Sigmoid colon (tissue), 7 donors: ENCODE measurements at regions of chr1 and their contacts with region 1.

Region 1: DNA sequence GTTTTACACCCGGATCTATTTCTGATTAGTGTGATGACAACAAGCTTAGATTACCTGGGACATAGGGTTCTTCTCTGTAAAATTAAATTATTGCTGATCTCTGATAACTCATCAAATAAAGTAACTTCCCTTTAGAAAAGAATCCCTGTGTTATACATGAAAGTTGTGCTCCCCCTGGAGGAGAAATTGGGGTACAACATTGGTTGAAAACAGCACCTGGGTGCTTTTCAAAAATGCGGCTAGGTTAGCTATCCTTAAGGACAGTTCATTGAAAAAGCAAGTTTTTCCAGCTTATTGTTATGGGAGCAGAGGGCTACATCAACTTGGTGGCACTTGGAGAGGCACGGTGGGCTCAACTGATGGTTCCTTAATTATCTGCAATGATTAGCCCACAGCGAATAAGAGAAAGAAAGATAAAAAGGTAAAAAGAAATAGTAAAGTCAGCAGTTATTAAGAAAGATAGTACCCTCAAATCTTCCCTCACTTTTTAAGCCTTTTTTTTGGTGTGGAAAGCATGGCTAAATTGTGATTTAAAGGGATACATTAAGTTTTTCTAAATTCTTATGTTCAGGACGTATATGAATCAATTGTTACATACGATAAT is 97.8 kb downstream of the FMN2 start:
- DNase-seq: no peak
- H3K4me3 ChIP-seq: no peak overlapping the region
- H3K27ac ChIP-seq: no peak overlapping the region
- H3K4me1 ChIP-seq: peaks cover 0 to 26% (median 14%) of the 10 kb centered on the region in 4 donors
- H3K27me3 ChIP-seq: no peaks in the 10 kb centered on the region
- CTCF ChIP-seq: peak; percentile 34 to 77 (median 68)
- EP300 ChIP-seq: no peak
- POLR2A ChIP-seq: no peak

Region 2: DNA sequence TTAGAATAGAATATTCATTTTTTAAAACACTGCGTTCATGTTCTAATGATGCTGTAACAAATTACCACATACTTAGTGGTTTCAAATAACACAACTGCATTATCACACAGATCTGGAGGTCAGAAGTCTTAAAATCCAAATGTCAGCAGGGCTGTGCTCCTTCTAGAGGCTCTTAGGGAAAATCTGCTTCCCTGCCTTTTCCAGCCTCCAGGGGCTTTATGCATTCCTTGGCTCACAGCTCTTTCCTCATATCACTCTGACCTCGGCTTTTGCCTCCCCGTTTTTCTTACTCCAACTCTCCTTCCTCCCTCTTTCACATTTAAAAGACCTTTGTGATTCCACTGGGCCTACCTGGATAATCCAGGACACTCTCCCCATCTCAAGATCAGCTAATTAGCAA is 116.4 kb before region 1 on chr1:
- intact Hi-C with region 1: no loop called
- DNase-seq: no peak
- H3K4me3 ChIP-seq: no peak overlapping the region
- H3K27ac ChIP-seq: no peak overlapping the region
- H3K4me1 ChIP-seq: no peaks in the 10 kb centered on the region
- H3K27me3 ChIP-seq: no peaks in the 10 kb centered on the region
- CTCF ChIP-seq: no peak
- EP300 ChIP-seq: no peak
- POLR2A ChIP-seq: no peak

Region 3: DNA sequence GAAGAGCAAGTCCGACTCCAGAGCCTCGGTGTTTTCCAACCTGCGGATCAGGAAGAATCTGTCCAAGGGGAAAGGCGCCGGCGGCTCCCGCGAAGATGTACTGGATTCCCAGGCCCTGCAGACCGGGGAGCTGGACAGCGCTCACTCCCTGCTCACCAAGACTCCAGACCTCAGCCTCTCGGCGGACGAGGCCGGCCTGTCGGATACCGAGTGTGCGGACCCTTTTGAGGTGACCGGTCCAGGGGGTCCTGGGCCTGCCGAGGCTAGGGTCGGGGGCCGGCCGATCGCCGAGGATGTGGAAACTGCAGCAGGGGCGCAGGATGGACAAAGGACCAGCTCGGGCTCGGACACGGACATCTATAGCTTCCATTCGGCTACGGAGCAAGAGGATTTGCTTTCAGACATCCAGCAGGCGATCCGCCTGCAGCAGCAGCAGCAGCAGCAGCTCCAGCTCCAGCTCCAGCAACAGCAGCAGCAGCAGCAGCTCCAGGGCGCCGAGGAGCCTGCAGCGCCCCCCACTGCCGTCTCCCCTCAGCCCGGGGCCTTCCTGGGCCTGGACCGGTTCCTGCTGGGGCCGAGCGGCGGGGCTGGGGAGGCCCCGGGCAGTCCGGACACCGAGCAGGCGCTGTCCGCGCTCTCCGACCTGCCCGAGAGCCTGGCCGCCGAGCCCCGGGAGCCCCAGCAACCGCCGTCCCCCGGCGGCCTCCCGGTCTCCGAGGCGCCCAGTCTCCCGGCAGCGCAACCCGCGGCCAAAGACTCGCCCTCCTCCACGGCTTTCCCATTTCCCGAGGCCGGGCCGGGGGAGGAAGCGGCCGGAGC is 97.0 kb before region 1 on chr1:
- intact Hi-C with region 1: loop called (anchors 2 kb)
- DNase-seq: peak; percentile 66
- H3K4me3 ChIP-seq: peak overlapping the region; percentile 54 to 77 (median 72)
- H3K27ac ChIP-seq: peak overlapping the region in 3 of 4 donors; percentile 82 to 92 (median 85)
- H3K4me1 ChIP-seq: peaks cover 0 to 33% (median 22%) of the 10 kb centered on the region in 4 donors
- H3K27me3 ChIP-seq: peaks cover 0 to 16% (median 0%) of the 10 kb centered on the region in 3 donors
- CTCF ChIP-seq: peak in 1 of 4 experiments; percentile 12
- EP300 ChIP-seq: no peak
- POLR2A ChIP-seq: no peak

Region 4: GRCh38 chr1:240285541-240285940 is 96.1 kb after region 1 on chr1:
- intact Hi-C with region 1: no loop called
- DNase-seq: no peak
- H3K4me3 ChIP-seq: no peak overlapping the region
- H3K27ac ChIP-seq: no peak overlapping the region
- H3K4me1 ChIP-seq: peaks cover 0 to 27% (median 10%) of the 10 kb centered on the region in 4 donors
- H3K27me3 ChIP-seq: no peaks in the 10 kb centered on the region
- CTCF ChIP-seq: no peak
- EP300 ChIP-seq: no peak
- POLR2A ChIP-seq: no peak

Region 5: GRCh38 chr1:240337781-240338180 is 148.3 kb after region 1 on chr1:
- intact Hi-C with region 1: loop called (anchors 5 kb)
- DNase-seq: peak; percentile 67
- H3K4me3 ChIP-seq: no peak overlapping the region
- H3K27ac ChIP-seq: peak overlapping the region; percentile 33 to 77 (median 56)
- H3K4me1 ChIP-seq: peaks cover 0 to 34% (median 16%) of the 10 kb centered on the region in 4 donors
- H3K27me3 ChIP-seq: no peaks in the 10 kb centered on the region
- CTCF ChIP-seq: no peak
- EP300 ChIP-seq: peak in 3 of 4 donors; percentile 30 to 54 (median 45)
- POLR2A ChIP-seq: no peak

Region 6: DNA sequence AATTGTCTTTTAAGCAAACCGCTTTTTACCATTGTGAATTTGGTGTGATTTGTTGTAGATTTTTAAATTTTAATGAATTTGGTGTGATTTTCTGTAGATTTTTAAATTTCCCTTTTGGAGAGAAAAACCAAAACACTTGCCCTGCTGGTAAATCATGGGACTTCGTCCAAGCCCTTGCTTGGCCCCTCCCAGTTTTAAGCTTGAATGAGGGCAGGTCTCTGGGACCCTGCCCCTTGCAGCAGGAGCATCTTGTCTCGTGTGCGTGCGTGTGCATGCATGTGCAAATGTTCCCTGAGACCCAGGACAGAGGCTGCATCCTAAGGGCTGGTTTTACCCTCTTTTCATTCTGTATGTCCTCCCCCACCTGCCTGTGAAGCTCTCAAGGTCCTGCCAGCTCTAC is 173.8 kb after region 1 on chr1:
- intact Hi-C with region 1: no loop called
- DNase-seq: no peak
- H3K4me3 ChIP-seq: no peak overlapping the region
- H3K27ac ChIP-seq: no peak overlapping the region
- H3K4me1 ChIP-seq: no peaks in the 10 kb centered on the region
- H3K27me3 ChIP-seq: no peaks in the 10 kb centered on the region
- CTCF ChIP-seq: no peak
- EP300 ChIP-seq: no peak
- POLR2A ChIP-seq: no peak

Region 7: DNA sequence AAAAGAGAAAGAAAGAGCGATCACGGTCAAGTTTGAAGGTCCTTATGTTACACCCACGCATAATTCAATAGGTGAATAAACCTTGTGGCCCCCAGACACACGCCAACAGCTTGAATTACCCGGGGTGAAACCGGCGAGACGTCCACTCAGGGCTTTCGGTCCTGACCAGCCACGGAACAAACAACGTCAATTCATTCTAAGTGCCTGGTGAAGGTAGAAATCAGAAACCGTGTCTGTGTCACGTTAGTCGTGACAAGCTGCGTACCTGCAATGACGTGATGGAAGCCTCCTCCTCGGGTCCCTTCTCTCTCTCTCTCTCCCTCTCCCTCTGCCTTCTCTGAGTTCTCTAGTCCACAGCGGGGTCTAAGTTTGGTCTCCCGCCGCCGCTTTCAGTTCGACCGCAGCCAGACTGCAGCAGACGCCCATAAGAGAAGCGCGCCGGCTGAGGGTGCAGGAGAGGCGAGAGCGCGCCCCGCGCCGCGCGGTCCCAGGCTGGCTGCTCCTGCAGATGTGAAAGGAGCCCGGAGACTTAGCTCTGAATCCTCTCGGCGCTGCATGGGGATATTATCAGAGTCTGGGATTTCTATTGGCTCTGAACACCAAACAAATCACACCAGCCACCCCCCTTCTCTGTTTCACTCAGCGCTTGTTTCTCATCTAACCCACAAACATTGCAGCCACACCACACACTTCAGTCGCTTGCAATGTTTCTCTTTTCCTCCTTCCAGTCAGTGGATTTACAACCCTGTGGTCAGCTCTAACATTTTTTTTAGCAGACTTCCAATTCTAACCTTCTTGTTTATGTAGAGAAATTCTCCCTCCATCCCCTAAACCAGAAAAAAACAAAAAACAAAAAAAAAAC is 422.4 kb after region 1 on chr1 and contains the start of gene GREM2:
- intact Hi-C with region 1: loop called (anchors 1 kb)
- DNase-seq: peak; percentile 83
- H3K4me3 ChIP-seq: peak within 1 kb of the TSS; percentile 54 to 64 (median 58)
- H3K27ac ChIP-seq: peak within 1 kb of the TSS; percentile 50 to 77 (median 72)
- H3K4me1 ChIP-seq: peaks cover 0 to 36% (median 17%) of the 10 kb centered on the region in 4 donors
- H3K27me3 ChIP-seq: no peaks in the 10 kb centered on the region
- CTCF ChIP-seq: no peak
- EP300 ChIP-seq: no peak
- POLR2A ChIP-seq: peak; percentile 41 to 54
- total RNA-seq, gene GREM2: 9.4 to 18.7 (median 13.9) TPM